Activated naive CD4-positive, alpha-beta T cell treated with anti-CD3 and anti-CD28 coated beads, Interleukin-2, amount 10 ng/mL, durations not matched to agents 7 days and 5 days (primary cell): ENCODE measurements at regions of chr11 and their contacts with region 1.

Region 1: GRCh38 chr11:62678770-62679696 is at the start of gene UBXN1:
- DNase-seq: peak; percentile 92
- H3K4me3 Mint-ChIP-seq: peak within 1 kb of the TSS; percentile 88
- H3K27ac Mint-ChIP-seq: peak within 1 kb of the TSS; percentile 90
- H3K4me1 Mint-ChIP-seq: peaks cover 47% of the 10 kb centered on the region
- H3K27me3 Mint-ChIP-seq: no peaks in the 10 kb centered on the region

Region 2: GRCh38 chr11:62487738-62488551 is 191.1 kb before region 1 on chr11:
- CTCF ChIA-PET with region 1: no interaction called
- DNase-seq: no peak
- H3K4me3 Mint-ChIP-seq: no peak overlapping the region
- H3K27ac Mint-ChIP-seq: no peak overlapping the region
- H3K4me1 Mint-ChIP-seq: peaks cover 7% of the 10 kb centered on the region
- H3K27me3 Mint-ChIP-seq: peaks cover 22% of the 10 kb centered on the region

Region 3: GRCh38 chr11:62689421-62690183 is 10.6 kb after region 1 on chr11 and contains the start of gene LRRN4CL:
- CTCF ChIA-PET with region 1: interaction called, 40 read pairs
- DNase-seq: no peak
- H3K4me3 Mint-ChIP-seq: no peak within 1 kb of the TSS
- H3K27ac Mint-ChIP-seq: no peak within 1 kb of the TSS
- H3K4me1 Mint-ChIP-seq: peaks cover under 1% of the 10 kb centered on the region
- H3K27me3 Mint-ChIP-seq: peaks cover 29% of the 10 kb centered on the region

Region 4: GRCh38 chr11:62705880-62706849 is 27.1 kb after region 1 on chr11:
- CTCF ChIA-PET with region 1: interaction called, 10 read pairs
- DNase-seq: peak; percentile 96
- H3K4me3 Mint-ChIP-seq: peak overlapping the region; percentile 87
- H3K27ac Mint-ChIP-seq: peak overlapping the region; percentile 66
- H3K4me1 Mint-ChIP-seq: peaks cover 57% of the 10 kb centered on the region
- H3K27me3 Mint-ChIP-seq: no peaks in the 10 kb centered on the region

Region 5: GRCh38 chr11:63012430-63012829 is 333.4 kb after region 1 on chr11:
- CTCF ChIA-PET with region 1: no interaction called
- DNase-seq: no peak
- H3K4me3 Mint-ChIP-seq: no peak overlapping the region
- H3K27ac Mint-ChIP-seq: no peak overlapping the region
- H3K4me1 Mint-ChIP-seq: no peaks in the 10 kb centered on the region
- H3K27me3 Mint-ChIP-seq: peaks cover 16% of the 10 kb centered on the region